ENCODE measurements at regions of chr12 and their contacts with region 1.

Region 1: DNA sequence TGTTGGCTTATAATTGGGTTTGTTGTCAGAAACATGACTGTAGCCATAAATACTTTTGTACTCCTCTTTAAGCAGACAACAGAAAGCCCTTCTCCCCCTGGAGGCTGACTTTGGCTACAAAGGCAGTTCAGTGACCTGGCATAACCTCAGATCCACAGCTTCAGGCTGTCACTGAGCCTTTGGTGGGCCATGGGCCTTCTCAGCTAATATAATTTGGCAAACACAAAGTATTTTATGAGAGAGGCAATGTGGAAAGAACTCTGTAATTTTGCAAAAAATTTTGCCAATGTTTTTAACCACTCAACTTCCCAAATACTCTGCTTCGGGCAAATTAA is 15.5 kb upstream of the MGP start:
- DNase-seq: no peak
- ATAC-seq: no peak
- H3K4me3 ChIP-seq: no peak overlapping the region
- H3K27ac ChIP-seq: peak overlapping the region; percentile 22 to 57 (median 48)
- H3K4me1 ChIP-seq: peaks cover 6 to 34% of the 10 kb centered on the region in 2 donors
- H3K27me3 ChIP-seq: no peaks in the 10 kb centered on the region
- CTCF ChIP-seq: no peak
- POLR2A ChIP-seq: no peak

Region 2: GRCh38 chr12:14952299-14952921 is 51.2 kb after region 1 on chr12:
- in situ Hi-C with region 1: no loop called
- intact Hi-C with region 1: loop called (anchors 5 kb)
- DNase-seq: no peak
- ATAC-seq: peak; percentile 63 to 68
- H3K4me3 ChIP-seq: no peak overlapping the region
- H3K27ac ChIP-seq: peak overlapping the region; percentile 59 to 72 (median 68)
- H3K4me1 ChIP-seq: peaks cover 7 to 24% of the 10 kb centered on the region in 2 donors
- H3K27me3 ChIP-seq: no peaks in the 10 kb centered on the region
- CTCF ChIP-seq: no peak
- POLR2A ChIP-seq: no peak

Region 3: DNA sequence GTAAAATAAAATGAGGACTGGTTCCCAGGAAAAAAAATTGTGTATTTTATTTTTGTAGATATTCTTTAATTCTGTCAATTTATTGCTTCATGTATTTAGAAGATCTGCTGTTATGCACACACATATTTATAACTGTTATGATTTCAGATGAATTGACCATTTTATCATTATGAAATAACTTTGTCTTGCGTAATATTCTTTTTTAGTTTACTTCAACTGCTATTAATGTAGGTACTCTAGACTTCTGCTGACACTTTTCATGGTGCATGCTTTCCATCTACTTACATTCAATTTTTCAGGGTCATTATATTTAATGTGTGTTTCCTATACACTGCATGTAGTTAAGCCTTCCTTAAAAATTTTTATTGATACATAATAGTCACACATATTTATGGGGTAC is 157.9 kb after region 1 on chr12:
- in situ Hi-C with region 1: no loop called
- intact Hi-C with region 1: no loop called
- DNase-seq: no peak
- ATAC-seq: no peak
- H3K4me3 ChIP-seq: no peak overlapping the region
- H3K27ac ChIP-seq: no peak overlapping the region
- H3K4me1 ChIP-seq: peaks cover 2 to 3% of the 10 kb centered on the region in 2 donors
- H3K27me3 ChIP-seq: no peaks in the 10 kb centered on the region
- CTCF ChIP-seq: no peak
- POLR2A ChIP-seq: no peak

Region 4: GRCh38 chr12:15289192-15289591 is 388.0 kb after region 1 on chr12:
- in situ Hi-C with region 1: no loop called
- intact Hi-C with region 1: no loop called
- DNase-seq: no peak
- ATAC-seq: no peak
- H3K4me3 ChIP-seq: no peak overlapping the region
- H3K27ac ChIP-seq: no peak overlapping the region
- H3K4me1 ChIP-seq: no peaks in the 10 kb centered on the region
- H3K27me3 ChIP-seq: no peaks in the 10 kb centered on the region
- CTCF ChIP-seq: no peak
- POLR2A ChIP-seq: no peak

Measured in gastrocnemius medialis (tissue), 4 donors.